ENCODE measurements at regions of chr6 and their contacts with region 1.

Region 1: GRCh38 chr6:10694302-10695085 is at the starts of genes C6orf52 and PAK1IP1:
- DNase-seq: peak; percentile 90 to 95
- ATAC-seq: peak; percentile 99 to 100 (median 100)
- H3K4me3 ChIP-seq: peak within 1 kb of the TSS; percentile 61 to 96 (median 71)
- H3K27ac ChIP-seq: peak within 1 kb of the TSS; percentile 89 to 99 (median 94)
- H3K4me1 ChIP-seq: peaks cover 0 to 31% (median 25%) of the 10 kb centered on the region in 9 donors
- H3K27me3 ChIP-seq: no peaks in the 10 kb centered on the region
- CTCF ChIP-seq: no peak
- total RNA-seq, gene C6orf52: 0.59 to 1.6 (median 0.86) TPM in 7 of 10 donors, not detected in the others
- total RNA-seq, gene PAK1IP1: 5.8 to 13.5 (median 8.4) TPM

Region 2: GRCh38 chr6:10505529-10505928 is 189.0 kb before region 1 on chr6:
- intact Hi-C with region 1: loop called in 7 of 10 experiments (anchors 2 to 10 kb)
- DNase-seq: no peak
- ATAC-seq: no peak
- H3K4me3 ChIP-seq: no peak overlapping the region
- H3K27ac ChIP-seq: no peak overlapping the region
- H3K4me1 ChIP-seq: peaks cover 0 to 6% (median 0%) of the 10 kb centered on the region in 9 donors
- H3K27me3 ChIP-seq: peaks cover 0 to 7% (median 0%) of the 10 kb centered on the region in 7 donors
- CTCF ChIP-seq: no peak

Region 3: GRCh38 chr6:10510592-10511367 is 183.7 kb before region 1 on chr6:
- intact Hi-C with region 1: loop called in 8 of 10 experiments (anchors 1 to 10 kb)
- DNase-seq: peak; percentile 59 to 65
- ATAC-seq: peak; percentile 89 to 97 (median 94)
- H3K4me3 ChIP-seq: peak overlapping the region in 6 of 10 donors; percentile 7 to 18 (median 12)
- H3K27ac ChIP-seq: peak overlapping the region; percentile 49 to 92 (median 82)
- H3K4me1 ChIP-seq: peaks cover 0 to 30% (median 5%) of the 10 kb centered on the region in 9 donors
- H3K27me3 ChIP-seq: no peaks in the 10 kb centered on the region
- CTCF ChIP-seq: peak; percentile 41 to 80 (median 65)

Region 4: DNA sequence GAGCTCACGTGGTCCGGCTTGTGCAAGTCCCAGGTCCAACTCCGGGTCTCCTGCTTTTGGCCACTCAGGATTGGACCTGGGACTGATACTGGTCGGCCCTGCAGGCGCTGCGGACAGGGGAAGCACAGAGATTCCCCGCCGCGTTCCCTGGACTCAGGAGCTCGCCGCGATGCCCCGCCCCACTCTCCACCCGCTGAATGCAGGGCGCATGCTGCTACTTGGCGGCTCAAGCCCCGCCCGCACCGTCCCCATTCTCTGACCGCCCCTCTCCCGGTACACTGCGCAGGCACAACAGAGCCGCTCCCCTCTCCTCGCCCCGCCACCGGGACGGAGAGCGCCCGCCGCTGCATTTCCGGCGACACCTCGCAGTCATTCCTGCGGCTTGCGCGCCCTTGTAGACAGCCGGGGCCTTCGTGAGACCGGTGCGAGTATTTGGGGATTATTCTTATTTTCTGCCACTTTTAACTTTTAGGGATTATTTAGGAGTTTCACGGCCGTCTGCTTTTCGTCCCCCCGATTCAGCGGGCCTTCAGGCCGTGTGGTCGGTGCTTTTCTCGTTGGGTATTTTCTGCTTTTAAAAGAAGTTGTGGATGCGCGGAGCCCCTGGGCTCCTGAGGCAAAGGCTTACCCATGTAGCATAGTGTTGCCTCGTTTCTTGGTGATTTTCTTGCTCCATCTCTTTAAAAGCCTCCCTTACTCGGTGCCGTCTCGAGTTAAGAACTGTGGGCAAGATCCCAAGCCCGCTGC is 28.5 kb after region 1 on chr6 and contains the start of gene TMEM14C:
- intact Hi-C with region 1: loop called in 4 of 10 experiments (anchors 1 to 2 kb)
- DNase-seq: peak; percentile 99
- ATAC-seq: peak; percentile 97 to 99 (median 98)
- H3K4me3 ChIP-seq: peak within 1 kb of the TSS; percentile 26 to 96 (median 78)
- H3K27ac ChIP-seq: peak within 1 kb of the TSS; percentile 44 to 96 (median 90)
- H3K4me1 ChIP-seq: peaks cover 18 to 56% (median 34%) of the 10 kb centered on the region in 9 donors
- H3K27me3 ChIP-seq: no peaks in the 10 kb centered on the region
- CTCF ChIP-seq: peak in 2 of 9 donors; percentile 4 to 5
- total RNA-seq, gene TMEM14C: 105 to 133 (median 116) TPM

Region 5: DNA sequence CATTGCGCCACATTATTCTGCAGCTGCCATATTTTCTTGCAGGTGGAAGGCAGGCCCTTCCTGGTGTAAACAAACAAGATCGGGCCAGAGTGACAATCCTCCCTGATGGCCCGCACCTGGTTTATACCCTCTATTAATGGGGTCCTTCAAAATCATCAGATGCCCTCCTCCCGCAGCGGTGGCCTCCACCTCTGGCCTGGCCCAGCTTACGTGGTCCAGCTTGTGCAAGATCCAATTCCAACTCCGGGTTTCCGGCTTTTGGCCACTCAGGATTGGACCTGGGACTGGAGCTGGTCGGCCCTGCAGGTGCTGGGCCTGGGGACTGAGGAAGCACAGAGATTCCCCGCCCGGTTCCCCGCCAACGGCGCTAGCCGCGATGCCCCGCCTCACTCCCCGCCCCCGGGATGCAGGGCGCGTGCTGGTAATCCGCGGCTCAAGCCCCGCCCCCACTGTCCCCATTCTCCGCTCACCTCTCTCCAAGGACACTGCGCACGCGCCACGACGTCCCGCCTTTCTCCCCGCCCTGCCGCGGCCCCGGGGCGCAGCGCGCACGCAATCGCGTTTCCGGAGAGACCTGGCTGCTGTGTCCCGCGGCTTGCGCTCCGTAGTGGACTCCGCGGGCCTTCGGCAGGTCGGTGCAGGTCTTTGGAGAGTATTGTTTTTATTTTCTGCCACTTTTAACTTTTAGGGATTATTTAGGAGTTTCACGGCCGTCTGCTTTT is 52.9 kb after region 1 on chr6 and contains the start of gene TMEM14B:
- intact Hi-C with region 1: loop called in 5 of 10 experiments (anchors 1 to 10 kb)
- DNase-seq: peak; percentile 100
- ATAC-seq: peak; percentile 99 to 100 (median 99)
- H3K4me3 ChIP-seq: peak within 1 kb of the TSS; percentile 59 to 82 (median 74)
- H3K27ac ChIP-seq: peak within 1 kb of the TSS in 9 of 10 donors; percentile 72 to 91 (median 84)
- H3K4me1 ChIP-seq: peaks cover 8 to 40% (median 25%) of the 10 kb centered on the region in 9 donors
- H3K27me3 ChIP-seq: no peaks in the 10 kb centered on the region
- CTCF ChIP-seq: no peak
- total RNA-seq, gene TMEM14B: 93.5 to 116 (median 108) TPM

Region 6: DNA sequence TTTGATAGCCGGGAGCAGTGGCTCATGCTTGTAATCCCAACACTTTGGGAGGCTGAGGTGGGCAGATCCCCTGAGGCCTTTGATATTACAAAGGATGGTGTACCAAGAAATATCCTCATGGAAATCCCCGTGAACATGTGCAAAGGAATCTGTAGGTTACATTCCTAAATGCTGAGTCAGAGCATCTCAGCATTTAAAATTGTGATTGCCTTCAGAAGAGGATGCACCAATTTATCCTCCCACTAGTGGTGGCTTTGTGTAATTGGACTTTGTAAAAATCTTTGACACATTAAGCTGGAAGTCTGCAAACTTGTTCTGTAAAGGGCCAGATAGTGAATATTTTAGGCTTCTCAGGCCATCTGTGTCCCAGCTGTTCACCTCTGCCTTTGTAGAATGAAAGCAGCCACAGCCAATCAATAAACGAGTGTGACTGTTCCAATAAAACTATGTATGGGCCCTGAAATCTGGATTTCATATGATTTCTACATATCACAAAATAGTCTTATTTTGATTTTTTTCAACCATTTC is 64.9 kb after region 1 on chr6:
- intact Hi-C with region 1: loop called in 1 of 10 experiments (anchors 10 kb)
- DNase-seq: no peak
- ATAC-seq: peak in 7 of 8 donors; percentile 38 to 69 (median 46)
- H3K4me3 ChIP-seq: no peak overlapping the region
- H3K27ac ChIP-seq: peak overlapping the region in 2 of 10 donors; percentile 20 to 24
- H3K4me1 ChIP-seq: peaks cover 0 to 18% (median 9%) of the 10 kb centered on the region in 9 donors
- H3K27me3 ChIP-seq: no peaks in the 10 kb centered on the region
- CTCF ChIP-seq: peak; percentile 17 to 58 (median 43)

Region 7: GRCh38 chr6:11224252-11224965 is 529.9 kb after region 1 on chr6:
- intact Hi-C with region 1: no loop called
- DNase-seq: no peak
- ATAC-seq: peak in 3 of 8 donors; percentile 9 to 26 (median 16)
- H3K4me3 ChIP-seq: peak overlapping the region in 6 of 10 donors; percentile 9 to 21 (median 14)
- H3K27ac ChIP-seq: peak overlapping the region; percentile 18 to 90 (median 79)
- H3K4me1 ChIP-seq: peaks cover 6 to 92% (median 76%) of the 10 kb centered on the region in 9 donors
- H3K27me3 ChIP-seq: no peaks in the 10 kb centered on the region
- CTCF ChIP-seq: no peak